Left ventricle myocardium superior (tissue), 1 donor: ENCODE measurements at regions of chr10 and their contacts with region 1.

Region 1: GRCh38 chr10:127906548-127907377 is at the start of gene PTPRE:
- DNase-seq: peak; percentile 92
- ATAC-seq: peak; percentile 89
- total RNA-seq, gene PTPRE: 15.1 TPM

Region 2: DNA sequence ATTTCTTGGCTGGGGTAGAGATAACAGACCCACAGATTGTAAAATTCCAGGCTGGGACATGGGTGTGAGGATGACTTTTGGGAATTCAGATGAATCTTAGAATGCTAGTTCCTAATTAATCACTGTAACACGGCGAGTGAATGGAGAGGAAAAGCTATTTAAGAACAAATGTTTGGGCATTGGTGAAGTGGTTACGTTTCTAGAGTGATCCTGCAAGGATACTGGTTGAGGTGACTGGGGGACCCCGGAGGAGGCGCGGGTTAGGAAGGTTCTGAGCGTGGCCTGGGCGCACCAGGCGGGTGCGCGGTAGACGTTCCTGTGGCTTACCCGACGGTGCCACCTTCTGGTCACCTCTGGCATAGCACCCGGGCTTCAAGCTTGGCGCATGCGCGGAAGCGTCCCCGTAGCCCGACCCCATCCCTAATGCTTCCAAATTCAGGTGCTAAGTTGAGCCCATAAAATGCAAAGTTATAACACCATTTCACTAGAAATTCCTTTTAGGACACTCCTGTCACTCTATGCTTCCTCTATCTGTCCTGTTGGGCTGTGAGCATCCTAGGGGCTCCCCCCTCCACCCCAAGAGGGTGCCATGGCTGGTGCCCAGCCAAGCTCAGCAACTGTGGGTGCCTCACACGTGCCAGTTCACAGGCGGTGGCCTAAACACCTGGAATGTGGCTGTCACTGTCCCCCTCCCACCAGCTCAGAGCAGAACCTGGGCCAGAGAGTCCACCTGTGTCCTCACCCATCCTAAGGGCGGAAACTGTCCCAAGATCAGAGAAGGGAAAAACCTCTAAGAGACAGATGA is 104.6 kb after region 1 on chr10:
- intact Hi-C with region 1: loop called (anchors 5 kb)
- DNase-seq: peak; percentile 90
- ATAC-seq: peak; percentile 90

Region 3: DNA sequence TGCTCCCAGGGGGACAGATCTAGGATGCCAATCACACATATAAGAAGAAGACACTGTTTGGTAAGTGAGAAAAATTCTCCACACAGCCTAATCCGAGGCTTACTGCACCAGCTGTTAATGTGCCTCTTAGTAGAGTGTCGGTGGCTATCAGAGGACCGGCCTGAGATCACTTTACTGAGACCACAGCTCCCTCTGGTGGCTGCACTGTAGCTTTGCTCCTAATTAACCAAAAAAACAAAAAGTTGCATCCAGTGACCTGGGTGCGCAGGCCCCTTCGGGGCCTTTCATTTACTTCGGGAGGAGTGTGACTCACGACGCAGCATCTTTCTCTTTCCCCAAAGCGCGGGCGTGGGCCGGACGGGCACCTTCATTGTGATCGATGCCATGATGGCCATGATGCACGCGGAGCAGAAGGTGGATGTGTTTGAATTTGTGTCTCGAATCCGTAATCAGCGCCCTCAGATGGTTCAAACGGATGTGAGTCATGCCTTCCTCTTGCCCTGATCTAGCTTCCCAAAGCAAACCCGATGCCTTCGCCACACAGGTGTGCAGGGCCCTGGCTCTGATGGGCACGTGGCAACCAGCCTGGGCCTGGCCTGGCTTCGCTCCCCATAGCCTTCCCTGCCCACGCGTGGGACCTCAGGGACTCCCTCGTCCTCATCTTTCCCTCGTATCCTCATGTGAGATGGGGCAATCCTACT is 162.7 kb after region 1 on chr10:
- intact Hi-C with region 1: loop called (anchors 10 kb)
- DNase-seq: peak; percentile 67
- ATAC-seq: peak; percentile 66